Gastrocnemius medialis (tissue), 4 donors: ENCODE measurements at regions of chr12 and their contacts with region 1.

Region 1: GRCh38 chr12:15165012-15165659 is 56.1 kb downstream of the RERG start:
- DNase-seq: peak in 1 of 2 donors; percentile 14
- ATAC-seq: peak; percentile 61 to 66
- H3K4me3 ChIP-seq: no peak overlapping the region
- H3K27ac ChIP-seq: peak overlapping the region; percentile 59 to 76 (median 72)
- H3K4me1 ChIP-seq: peaks cover 0 to 6% of the 10 kb centered on the region in 2 donors
- H3K27me3 ChIP-seq: no peaks in the 10 kb centered on the region
- CTCF ChIP-seq: no peak
- POLR2A ChIP-seq: peak in 1 of 2 donors; percentile 33

Region 2: DNA sequence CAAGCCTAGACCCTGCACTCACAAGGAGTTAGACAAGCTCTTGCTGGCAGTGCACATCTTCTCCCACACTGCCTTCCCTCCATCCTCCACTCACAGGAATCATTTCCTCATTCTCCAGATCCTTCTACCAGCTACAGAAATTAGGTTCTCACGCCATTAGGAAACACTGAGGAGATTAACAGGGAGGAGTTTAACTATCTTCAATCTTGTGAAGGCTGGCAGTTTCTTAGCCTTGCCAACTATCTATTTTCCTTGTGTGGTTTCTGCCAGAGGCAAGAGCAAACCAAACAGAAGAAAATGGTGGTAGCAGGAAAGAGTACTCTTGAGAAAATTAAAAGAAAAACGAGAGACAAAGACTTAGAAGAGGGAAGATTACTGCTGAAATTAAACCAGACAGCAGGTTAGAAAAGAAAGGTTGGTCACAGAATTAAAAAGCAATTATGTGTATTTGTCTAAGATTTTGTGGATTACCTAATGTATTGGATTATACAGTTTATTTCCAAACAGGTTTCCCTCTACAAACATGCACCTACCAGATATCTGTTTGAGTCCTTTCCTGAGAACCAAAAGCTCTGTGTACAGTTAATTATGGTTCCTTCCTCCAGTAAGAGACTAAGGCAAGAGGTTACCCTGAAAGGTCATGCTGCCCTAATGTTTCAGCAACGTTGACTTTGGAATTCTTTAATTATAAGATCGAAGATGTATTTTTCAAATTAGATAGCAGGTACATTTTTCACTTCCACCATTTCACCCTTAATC is 51.1 kb after region 1 on chr12:
- in situ Hi-C with region 1: no loop called
- intact Hi-C with region 1: loop called (anchors 5 kb)
- DNase-seq: no peak
- ATAC-seq: no peak
- H3K4me3 ChIP-seq: no peak overlapping the region
- H3K27ac ChIP-seq: peak overlapping the region; percentile 10 to 47 (median 18)
- H3K4me1 ChIP-seq: peaks cover 0 to 5% of the 10 kb centered on the region in 2 donors
- H3K27me3 ChIP-seq: no peaks in the 10 kb centered on the region
- CTCF ChIP-seq: no peak
- POLR2A ChIP-seq: no peak